ENCODE measurements at regions of chr15 and their contacts with region 1.

Region 1: GRCh38 chr15:70826634-70827033 is 27.3 kb downstream of the LARP6 start:
- DNase-seq: peak; percentile 85
- H3K4me3 Mint-ChIP-seq: no peak overlapping the region
- H3K27ac Mint-ChIP-seq: peak overlapping the region; percentile 89
- H3K4me1 Mint-ChIP-seq: peaks cover 16% of the 10 kb centered on the region
- H3K27me3 Mint-ChIP-seq: no peaks in the 10 kb centered on the region
- CTCF ChIP-seq: no peak

Region 2: DNA sequence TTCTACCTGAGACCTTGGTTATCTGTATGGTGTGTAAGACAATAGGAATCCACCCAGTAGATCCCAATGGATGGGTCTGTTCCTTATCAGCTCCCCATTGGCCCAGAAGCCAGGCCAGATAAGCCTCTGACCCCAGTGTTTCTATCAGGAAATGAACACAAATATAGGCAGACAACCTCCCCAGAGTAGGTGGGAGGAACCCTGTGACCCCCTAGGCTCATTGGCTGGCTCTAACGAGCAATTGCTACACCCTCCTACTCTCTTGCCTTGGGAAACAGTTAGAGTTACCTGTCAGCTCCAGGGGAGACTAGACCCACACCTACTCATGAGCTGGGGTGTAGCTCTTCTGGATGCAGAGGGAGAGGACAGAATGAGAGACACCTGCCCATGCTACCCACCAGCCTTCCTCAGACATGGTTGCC is 363.2 kb before region 1 on chr15:
- CTCF ChIA-PET with region 1: no interaction called
- POLR2A ChIA-PET with region 1: no interaction called
- intact Hi-C with region 1: no loop called
- DNase-seq: no peak
- H3K4me3 Mint-ChIP-seq: no peak overlapping the region
- H3K27ac Mint-ChIP-seq: no peak overlapping the region
- H3K4me1 Mint-ChIP-seq: peaks cover 12% of the 10 kb centered on the region
- H3K27me3 Mint-ChIP-seq: no peaks in the 10 kb centered on the region
- CTCF ChIP-seq: no peak

Region 3: DNA sequence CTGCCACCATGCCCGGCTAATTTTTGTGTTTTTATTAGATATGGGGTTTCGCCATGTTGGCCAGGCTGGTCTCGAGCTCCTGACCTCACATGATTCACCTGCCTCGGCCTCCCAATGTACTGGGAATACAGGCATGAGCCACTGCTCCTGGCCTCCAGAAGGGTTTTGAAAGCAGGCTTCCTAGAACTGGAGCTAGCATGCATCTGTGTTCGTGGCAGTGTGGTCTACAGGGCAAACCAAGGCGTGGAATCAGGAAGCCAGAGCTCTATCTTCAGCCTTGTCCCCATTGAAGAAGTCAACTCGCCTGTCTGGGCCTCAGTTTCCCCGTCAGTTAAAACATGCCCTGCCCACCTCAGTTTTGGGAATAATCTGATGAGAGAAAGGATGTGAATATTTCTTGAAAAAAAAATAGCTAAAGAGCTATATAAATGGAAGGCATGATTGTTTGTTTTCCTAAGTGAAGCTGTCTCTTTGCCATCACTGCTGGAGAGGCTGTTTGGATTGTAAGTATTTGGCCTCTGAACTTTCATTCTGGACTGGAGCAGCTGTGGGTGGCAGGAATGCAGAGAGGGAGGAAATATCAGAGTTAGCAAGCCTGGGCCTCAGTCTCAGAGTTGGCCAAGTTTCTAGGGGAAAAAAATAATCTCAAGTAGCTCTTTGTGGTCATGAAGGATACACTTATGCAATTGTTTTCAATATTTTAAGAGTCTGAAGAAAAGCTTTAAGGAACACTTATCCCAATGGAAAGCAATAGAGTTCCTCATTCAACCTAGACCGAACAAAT is 26.8 kb before region 1 on chr15:
- CTCF ChIA-PET with region 1: interaction called, 11 read pairs
- POLR2A ChIA-PET with region 1: no interaction called
- intact Hi-C with region 1: no loop called
- DNase-seq: peak; percentile 75
- H3K4me3 Mint-ChIP-seq: no peak overlapping the region
- H3K27ac Mint-ChIP-seq: peak overlapping the region; percentile 82
- H3K4me1 Mint-ChIP-seq: peaks cover 24% of the 10 kb centered on the region
- H3K27me3 Mint-ChIP-seq: no peaks in the 10 kb centered on the region
- CTCF ChIP-seq: no peak

Region 4: DNA sequence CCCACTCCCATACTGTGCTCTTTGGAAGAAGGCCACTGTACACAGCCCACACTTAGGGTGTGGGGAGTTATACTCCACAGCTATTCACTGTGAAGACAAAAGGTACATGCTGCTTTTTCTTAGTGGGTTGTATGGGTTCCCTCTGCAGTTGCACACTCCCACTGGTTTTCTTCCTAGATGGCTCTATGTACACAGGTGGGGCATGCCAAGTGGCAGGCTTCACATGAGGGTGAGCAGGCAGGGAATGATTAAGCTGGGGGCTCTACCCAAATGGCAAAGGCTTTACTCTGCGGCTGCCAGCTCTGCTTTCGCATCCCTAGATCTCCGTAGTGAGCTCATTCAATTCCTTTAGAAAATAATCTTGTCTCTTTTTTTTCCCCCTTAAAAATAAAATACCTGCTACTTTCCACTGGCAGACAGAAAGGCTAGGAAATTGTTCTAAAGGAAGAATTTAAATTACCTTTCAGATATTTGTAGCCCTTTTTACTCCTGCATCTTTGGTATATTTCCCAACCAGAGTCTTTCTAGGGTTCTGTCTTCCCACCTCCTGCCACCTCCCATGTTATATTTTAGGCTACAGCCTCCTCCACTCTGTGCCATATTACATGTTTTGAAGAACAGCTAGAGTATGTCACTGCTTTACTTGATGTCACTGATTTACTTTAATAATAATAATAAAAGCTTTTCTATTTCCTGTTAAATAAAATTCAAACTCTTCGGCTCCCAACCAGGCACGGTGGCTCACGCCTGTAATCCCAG is 19.1 kb after region 1 on chr15:
- CTCF ChIA-PET with region 1: interaction called, 17 read pairs
- POLR2A ChIA-PET with region 1: no interaction called
- intact Hi-C with region 1: no loop called
- DNase-seq: no peak
- H3K4me3 Mint-ChIP-seq: no peak overlapping the region
- H3K27ac Mint-ChIP-seq: no peak overlapping the region
- H3K4me1 Mint-ChIP-seq: no peaks in the 10 kb centered on the region
- H3K27me3 Mint-ChIP-seq: no peaks in the 10 kb centered on the region
- CTCF ChIP-seq: no peak

Region 5: GRCh38 chr15:70870051-70870450 is 43.4 kb after region 1 on chr15:
- CTCF ChIA-PET with region 1: interaction called, 109 read pairs
- POLR2A ChIA-PET with region 1: interaction called, 10 read pairs
- intact Hi-C with region 1: loop called (anchors 1 kb)
- DNase-seq: no peak
- H3K4me3 Mint-ChIP-seq: no peak overlapping the region
- H3K27ac Mint-ChIP-seq: no peak overlapping the region
- H3K4me1 Mint-ChIP-seq: peaks cover 22% of the 10 kb centered on the region
- H3K27me3 Mint-ChIP-seq: no peaks in the 10 kb centered on the region
- CTCF ChIP-seq: no peak

Region 6: DNA sequence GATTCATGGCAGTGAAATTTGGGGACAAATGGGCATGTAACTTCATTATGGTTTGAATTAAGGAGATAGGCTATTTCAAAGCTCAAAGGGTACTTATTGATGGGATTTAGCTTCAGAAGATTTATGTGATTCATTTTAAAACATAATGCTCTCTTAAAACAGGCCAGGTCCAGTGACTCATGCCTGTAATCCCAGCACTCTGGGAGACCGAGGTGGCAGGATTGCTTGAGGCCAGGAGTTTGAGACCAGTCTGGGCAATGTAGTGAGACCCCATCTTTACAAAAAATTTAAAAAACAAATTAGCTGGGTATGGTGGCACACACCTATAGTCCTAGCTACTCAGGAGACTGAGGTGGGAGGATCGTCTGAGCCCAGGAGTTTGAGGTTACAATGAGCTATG is 54.1 kb after region 1 on chr15:
- CTCF ChIA-PET with region 1: interaction called, 109 read pairs
- POLR2A ChIA-PET with region 1: no interaction called
- intact Hi-C with region 1: loop called (anchors 1 kb)
- DNase-seq: no peak
- H3K4me3 Mint-ChIP-seq: no peak overlapping the region
- H3K27ac Mint-ChIP-seq: no peak overlapping the region
- H3K4me1 Mint-ChIP-seq: no peaks in the 10 kb centered on the region
- H3K27me3 Mint-ChIP-seq: no peaks in the 10 kb centered on the region
- CTCF ChIP-seq: no peak

Measured in MCF 10A (cell line).